ENCODE measurements at regions of chr19 and their contacts with region 1.

Region 1: GRCh38 chr19:6737284-6738046 is at the start of gene GPR108:
- DNase-seq: peak; percentile 100
- H3K4me3 ChIP-seq: peak within 1 kb of the TSS; percentile 76
- CTCF ChIP-seq: no peak

Region 2: GRCh38 chr19:4851551-4852290 is 1885.7 kb before region 1 on chr19:
- CTCF ChIA-PET with region 1: no interaction called
- POLR2A ChIA-PET with region 1: no interaction called
- DNase-seq: no peak
- H3K4me3 ChIP-seq: no peak overlapping the region
- CTCF ChIP-seq: peak; percentile 89

Region 3: GRCh38 chr19:6516659-6517291 is 220.7 kb before region 1 on chr19:
- CTCF ChIA-PET with region 1: interaction called, 22 read pairs
- POLR2A ChIA-PET with region 1: no interaction called
- DNase-seq: peak; percentile 3
- H3K4me3 ChIP-seq: peak overlapping the region; percentile 73
- CTCF ChIP-seq: peak; percentile 98

Region 4: GRCh38 chr19:6626764-6627163 is 110.7 kb before region 1 on chr19:
- CTCF ChIA-PET with region 1: no interaction called
- POLR2A ChIA-PET with region 1: no interaction called
- DNase-seq: no peak
- H3K4me3 ChIP-seq: no peak overlapping the region
- CTCF ChIP-seq: no peak

Region 5: DNA sequence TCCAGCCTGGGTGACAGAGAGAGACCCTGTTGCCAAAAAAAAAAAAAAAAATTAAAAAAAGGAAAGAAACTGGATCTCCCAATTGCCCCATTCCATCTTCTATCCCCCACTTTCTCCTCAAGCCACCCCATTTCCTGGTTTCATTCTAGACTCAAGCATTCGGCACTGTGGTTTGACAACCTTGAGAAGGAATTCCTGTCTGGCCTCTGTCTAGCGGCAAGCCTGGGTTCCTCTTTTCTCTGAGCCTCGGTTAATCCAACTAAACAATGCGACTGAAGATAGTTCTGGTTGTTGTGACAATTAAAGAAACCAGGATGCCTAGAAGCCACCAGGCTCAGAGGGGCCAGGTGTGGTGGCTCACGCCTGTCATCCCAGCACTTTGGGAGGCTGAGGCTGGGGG is 13.7 kb before region 1 on chr19:
- CTCF ChIA-PET with region 1: interaction called, 11 read pairs
- POLR2A ChIA-PET with region 1: no interaction called
- DNase-seq: no peak
- H3K4me3 ChIP-seq: no peak overlapping the region
- CTCF ChIP-seq: no peak

Measured in AG04449 (cell line).